Ovary (tissue), 10 donors: ENCODE measurements at regions of chr12 and their contacts with region 1.

Region 1: DNA sequence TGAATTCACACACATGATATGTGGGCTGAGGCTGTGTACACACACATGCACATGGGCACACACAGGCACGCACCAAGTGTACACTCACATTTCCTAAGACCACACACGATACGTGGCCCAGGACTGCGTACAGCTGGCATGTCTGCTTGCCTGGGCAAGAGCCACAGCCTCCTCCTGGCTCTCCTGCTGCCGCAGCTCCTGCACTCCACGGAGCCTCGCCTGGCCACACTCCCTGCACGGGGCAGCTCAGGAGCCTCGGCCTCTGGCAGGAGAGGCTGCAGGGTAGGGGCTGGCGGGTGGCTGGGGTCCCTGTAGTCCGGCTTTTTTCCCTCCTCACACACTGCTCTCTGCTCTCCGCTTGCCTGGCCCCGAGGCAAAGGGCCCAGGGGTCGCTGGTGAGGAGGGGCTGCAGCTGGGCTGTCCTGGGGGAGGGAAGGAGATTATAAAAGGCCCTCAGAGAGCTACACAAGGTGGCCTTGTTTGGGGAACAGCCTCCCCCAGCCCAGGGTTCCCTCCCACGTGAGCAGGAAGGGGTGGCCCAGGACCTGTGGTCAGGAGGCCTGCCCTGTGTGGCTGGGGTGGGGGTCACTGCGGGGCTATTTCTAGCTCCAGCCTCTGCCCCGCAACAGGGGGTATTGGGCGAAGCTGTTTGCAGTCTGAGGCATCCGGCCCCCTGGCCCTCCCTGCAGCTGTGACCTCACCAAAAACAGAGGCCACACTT is 89.0 kb upstream of the SFSWAP start:
- DNase-seq: peak in 2 of 5 donors; percentile 18 to 31
- H3K4me3 ChIP-seq: no peak overlapping the region
- H3K27ac ChIP-seq: no peak overlapping the region
- H3K4me1 ChIP-seq: no peaks in the 10 kb centered on the region
- H3K27me3 ChIP-seq: no peaks in the 10 kb centered on the region
- CTCF ChIP-seq: no peak
- EP300 ChIP-seq: no peak
- POLR2A ChIP-seq: no peak

Region 2: GRCh38 chr12:131333621-131334367 is 288.1 kb before region 1 on chr12:
- intact Hi-C with region 1: loop called in 1 of 4 experiments (anchors 10 kb)
- DNase-seq: no peak
- H3K4me3 ChIP-seq: no peak overlapping the region
- H3K27ac ChIP-seq: no peak overlapping the region
- H3K4me1 ChIP-seq: no peaks in the 10 kb centered on the region
- H3K27me3 ChIP-seq: no peaks in the 10 kb centered on the region
- CTCF ChIP-seq: no peak
- EP300 ChIP-seq: no peak
- POLR2A ChIP-seq: no peak

Region 3: DNA sequence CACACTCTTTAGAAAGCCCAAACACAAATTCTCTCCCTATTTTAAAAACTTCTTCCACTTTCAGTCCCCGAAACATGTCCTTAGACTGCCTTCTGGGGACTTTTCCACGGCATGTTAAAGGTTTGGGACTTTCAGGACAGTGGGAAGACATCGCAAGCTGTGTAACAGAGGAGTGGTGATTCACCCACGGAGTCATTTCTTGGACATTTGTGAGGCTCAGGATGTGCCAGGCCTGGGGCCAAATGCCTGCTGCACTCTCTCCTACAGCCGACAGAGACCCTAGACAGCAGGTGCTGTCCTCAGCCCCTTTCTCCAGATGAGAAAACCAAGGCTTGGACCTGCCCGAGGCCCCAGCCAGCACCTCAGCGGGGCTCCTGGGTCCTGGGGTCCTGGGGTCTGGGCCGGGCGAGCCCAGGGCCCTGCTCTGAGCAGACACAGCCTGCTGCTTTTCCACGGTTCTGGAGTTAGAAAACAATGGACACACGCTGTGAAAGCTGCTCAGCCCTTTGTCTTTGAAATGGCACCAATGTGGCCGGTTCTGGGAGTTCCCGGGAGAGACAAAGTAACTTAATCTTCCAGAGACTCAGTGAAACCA is 281.1 kb before region 1 on chr12:
- intact Hi-C with region 1: loop called in 3 of 4 experiments (anchors 2 to 10 kb)
- DNase-seq: no peak
- H3K4me3 ChIP-seq: no peak overlapping the region
- H3K27ac ChIP-seq: no peak overlapping the region
- H3K4me1 ChIP-seq: no peaks in the 10 kb centered on the region
- H3K27me3 ChIP-seq: no peaks in the 10 kb centered on the region
- CTCF ChIP-seq: no peak
- EP300 ChIP-seq: no peak
- POLR2A ChIP-seq: no peak

Region 4: DNA sequence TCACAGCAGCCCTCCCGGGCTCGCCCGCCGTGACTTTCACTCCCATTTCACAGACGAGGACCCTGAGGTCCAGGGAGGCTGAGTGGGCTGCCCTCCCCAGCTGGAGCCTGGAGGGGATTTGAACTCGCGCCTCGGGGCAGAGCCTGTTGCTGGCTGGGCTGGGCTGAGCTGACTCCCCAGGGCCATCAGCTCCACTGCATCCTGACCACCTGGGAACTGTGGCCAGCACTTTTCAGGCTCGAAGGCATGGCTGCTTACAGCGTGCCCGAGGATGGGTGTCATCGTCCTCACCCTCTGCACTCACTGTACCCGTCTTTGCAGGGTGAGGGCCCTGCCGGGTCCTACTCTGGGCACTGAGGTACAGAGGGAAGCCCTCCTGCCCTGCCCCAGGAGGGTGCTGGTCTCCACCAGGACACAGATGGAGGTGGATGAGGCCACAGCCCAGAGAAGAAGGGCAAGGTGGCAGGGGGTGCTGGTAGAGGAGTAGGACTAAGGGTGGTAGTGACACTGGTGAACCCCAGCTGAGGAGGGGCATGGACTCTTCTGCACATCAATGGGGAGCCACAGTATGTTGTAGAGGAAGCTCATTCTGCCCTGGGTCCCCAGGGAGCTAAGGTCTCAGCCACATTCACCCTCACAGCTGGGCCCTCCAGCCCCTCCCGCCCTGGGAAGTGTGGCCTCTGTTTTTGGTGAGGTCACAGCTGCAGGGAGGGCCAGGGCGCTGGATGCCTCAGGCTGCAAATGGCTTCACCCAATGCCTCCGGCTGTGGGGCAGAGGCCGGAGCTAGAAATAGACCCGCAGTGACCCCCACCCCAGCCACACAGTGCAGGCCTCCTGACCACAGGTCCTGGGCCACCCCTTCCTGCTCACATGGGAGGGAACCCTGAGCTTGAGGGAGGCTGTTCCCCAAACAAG is 276.1 kb before region 1 on chr12:
- intact Hi-C with region 1: loop called in 2 of 4 experiments (anchors 2 to 5 kb)
- DNase-seq: no peak
- H3K4me3 ChIP-seq: no peak overlapping the region
- H3K27ac ChIP-seq: no peak overlapping the region
- H3K4me1 ChIP-seq: peaks cover 21% of the 10 kb centered on the region
- H3K27me3 ChIP-seq: no peaks in the 10 kb centered on the region
- CTCF ChIP-seq: no peak
- EP300 ChIP-seq: no peak
- POLR2A ChIP-seq: no peak